Activated CD8-positive, alpha-beta memory T cell treated with anti-CD3 and anti-CD28 coated beads, Interleukin-2, amount 10 ng/mL, durations not matched to agents 7 days and 5 days (primary cell): ENCODE measurements at regions of chr6 and their contacts with region 1.

Region 1: GRCh38 chr6:45922728-45923351 is 92.8 kb downstream of the CLIC5 start:
- DNase-seq: peak; percentile 83
- ATAC-seq: peak; percentile 55
- H3K4me3 Mint-ChIP-seq: peak overlapping the region; percentile 30
- H3K27ac Mint-ChIP-seq: peak overlapping the region; percentile 79
- H3K4me1 Mint-ChIP-seq: peaks cover 65% of the 10 kb centered on the region
- H3K27me3 Mint-ChIP-seq: no peaks in the 10 kb centered on the region

Region 2: GRCh38 chr6:44630125-44631028 is 1292.5 kb before region 1 on chr6:
- CTCF ChIA-PET with region 1: interaction called, 16 read pairs
- DNase-seq: peak; percentile 59
- ATAC-seq: peak; percentile 83
- H3K4me3 Mint-ChIP-seq: no peak overlapping the region
- H3K27ac Mint-ChIP-seq: no peak overlapping the region
- H3K4me1 Mint-ChIP-seq: peaks cover 10% of the 10 kb centered on the region
- H3K27me3 Mint-ChIP-seq: peaks cover 9% of the 10 kb centered on the region

Region 3: DNA sequence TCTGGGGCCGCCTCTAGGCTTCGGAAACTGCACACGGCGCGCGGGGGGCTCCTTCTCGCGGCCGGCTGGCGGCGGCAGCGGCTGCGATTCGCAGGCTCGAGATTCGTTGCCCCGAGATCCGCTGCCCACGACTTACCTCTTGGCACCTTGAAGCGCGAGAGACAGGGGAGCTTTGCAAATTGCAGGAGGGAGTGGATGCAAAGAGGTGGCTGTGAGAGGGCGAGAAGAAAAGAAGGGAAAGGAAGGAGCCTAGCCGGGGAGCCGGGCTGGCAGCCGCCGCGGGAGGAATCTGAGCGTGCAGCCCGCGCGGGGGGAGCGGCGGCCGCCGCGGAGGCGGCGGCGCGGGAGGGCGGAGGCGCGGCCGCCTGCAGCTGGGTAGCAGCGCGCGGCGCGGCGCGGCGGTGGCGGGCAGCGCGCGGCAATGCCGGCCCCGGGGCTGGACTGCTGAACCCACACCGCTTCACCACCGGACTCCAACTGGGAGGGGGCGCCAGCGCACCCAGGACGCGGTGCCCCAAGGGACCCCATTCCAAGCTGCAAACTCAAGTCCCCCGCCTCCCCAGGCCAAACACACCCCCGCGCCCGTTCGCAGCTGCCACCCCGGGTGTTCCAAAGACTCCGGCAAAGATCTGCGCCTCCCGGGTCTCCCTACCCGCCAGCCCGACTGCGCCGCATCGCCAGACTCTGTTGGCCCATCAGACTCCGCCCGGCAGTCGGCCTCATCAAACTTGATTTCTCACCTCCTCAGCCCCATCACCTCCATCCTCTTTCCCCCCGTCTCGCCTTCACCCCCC is 500.9 kb before region 1 on chr6:
- CTCF ChIA-PET with region 1: interaction called, 28 read pairs
- DNase-seq: peak; percentile 75
- ATAC-seq: peak; percentile 37
- H3K4me3 Mint-ChIP-seq: peak overlapping the region; percentile 95
- H3K27ac Mint-ChIP-seq: peak overlapping the region; percentile 91
- H3K4me1 Mint-ChIP-seq: peaks cover 42% of the 10 kb centered on the region
- H3K27me3 Mint-ChIP-seq: peaks cover 27% of the 10 kb centered on the region

Region 4: DNA sequence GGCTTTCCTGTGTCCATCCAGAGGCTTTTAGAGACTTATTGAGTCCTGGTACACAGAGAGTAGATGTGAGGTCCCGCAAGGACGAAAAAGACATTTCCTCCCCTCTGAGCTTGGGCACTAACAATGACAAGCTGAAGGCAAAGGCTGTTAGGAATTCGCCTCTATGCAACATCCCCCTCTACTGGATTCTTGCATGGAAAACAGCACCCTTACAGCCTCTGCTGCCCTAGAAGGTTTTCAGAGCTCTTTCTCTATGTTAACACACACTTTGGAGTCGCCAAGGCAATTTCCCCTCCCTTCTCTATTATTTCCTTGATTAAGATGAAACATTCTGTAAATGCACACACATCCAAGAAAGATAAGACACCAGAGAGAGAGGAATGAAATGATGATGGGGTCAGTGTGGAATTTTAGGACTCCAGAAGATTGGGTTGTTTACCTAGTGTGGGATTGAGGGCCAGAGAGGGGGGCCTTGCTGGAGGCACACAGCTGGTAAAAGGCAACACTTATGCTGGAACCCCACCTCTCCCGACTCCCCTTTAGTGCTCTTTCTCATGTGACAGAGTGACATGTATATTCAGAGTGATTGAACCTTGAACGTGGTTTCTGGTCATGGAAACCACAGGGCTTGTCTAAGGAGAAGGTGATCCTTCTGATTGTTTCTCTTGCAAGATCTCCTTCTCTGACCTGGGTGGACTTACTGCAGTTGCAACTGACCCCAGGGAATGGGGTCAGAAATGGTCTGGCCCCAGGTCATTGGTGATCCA is 207.9 kb before region 1 on chr6:
- CTCF ChIA-PET with region 1: interaction called, 22 read pairs
- DNase-seq: peak; percentile 71
- ATAC-seq: peak; percentile 63
- H3K4me3 Mint-ChIP-seq: no peak overlapping the region
- H3K27ac Mint-ChIP-seq: peak overlapping the region; percentile 71
- H3K4me1 Mint-ChIP-seq: peaks cover 57% of the 10 kb centered on the region
- H3K27me3 Mint-ChIP-seq: no peaks in the 10 kb centered on the region

Region 5: DNA sequence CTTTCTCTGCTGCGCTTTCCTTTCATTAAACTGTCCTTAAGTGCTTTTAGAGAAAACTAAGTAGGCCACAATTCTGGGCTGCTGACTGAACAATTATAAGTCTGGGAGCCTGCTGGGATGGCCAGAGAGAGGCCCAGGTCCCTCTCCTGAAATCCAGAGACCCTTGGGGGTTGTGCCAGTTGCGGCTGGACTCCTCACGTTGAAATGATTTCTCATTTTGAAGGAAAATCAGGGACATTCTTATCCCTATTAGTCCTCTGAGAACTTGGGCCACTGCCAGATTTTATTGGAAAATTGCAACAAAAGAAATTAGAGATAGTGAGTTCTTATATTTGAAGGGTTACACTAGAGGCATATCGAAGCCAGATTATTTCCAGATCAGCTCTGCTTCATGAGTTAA is 52.3 kb before region 1 on chr6:
- CTCF ChIA-PET with region 1: no interaction called
- DNase-seq: no peak
- ATAC-seq: no peak
- H3K4me3 Mint-ChIP-seq: no peak overlapping the region
- H3K27ac Mint-ChIP-seq: no peak overlapping the region
- H3K4me1 Mint-ChIP-seq: peaks cover 3% of the 10 kb centered on the region
- H3K27me3 Mint-ChIP-seq: peaks cover 41% of the 10 kb centered on the region